ENCODE measurements at regions of chr16 and their contacts with region 1.

Region 1: DNA sequence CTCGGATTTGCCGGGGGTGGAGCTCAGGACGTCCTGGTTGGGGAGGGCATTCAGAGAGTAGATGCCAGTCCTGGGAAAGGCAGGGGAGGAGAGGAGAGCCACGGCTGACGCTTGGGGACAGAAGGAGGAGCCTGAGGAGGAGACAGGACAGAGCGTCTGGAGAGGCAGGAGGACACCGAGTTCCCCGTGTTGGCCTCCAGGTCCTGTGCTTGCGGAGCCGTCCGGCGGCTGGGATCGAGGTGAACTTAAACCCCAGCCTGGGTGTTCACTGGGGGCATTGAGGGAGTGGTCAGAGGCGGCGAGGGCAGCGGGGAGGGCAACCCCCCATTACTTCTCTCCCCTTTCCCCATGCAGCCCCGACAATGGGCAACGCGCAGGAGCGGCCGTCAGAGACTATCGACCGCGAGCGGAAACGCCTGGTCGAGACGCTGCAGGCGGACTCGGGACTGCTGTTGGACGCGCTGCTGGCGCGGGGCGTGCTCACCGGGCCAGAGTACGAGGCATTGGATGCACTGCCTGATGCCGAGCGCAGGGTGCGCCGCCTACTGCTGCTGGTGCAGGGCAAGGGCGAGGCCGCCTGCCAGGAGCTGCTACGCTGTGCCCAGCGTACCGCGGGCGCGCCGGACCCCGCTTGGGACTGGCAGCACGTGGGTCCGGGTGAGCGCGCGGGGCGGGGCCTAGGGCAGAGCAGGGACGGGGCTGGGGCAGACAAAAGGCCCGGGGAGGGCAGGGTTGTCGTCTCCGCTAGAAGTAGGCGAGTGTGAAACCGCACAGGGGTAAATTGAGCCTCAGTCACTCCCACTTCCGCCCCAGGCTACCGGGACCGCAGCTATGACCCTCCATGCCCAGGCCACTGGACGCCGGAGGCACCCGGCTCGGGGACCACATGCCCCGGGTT is 3.7 kb downstream of the NOL3 start:
- DNase-seq: peak; percentile 85 to 93
- H3K4me3 ChIP-seq: peak overlapping the region; percentile 57
- H3K27ac ChIP-seq: peak overlapping the region; percentile 64
- H3K4me1 ChIP-seq: peaks cover 56% of the 10 kb centered on the region
- H3K27me3 ChIP-seq: no peaks in the 10 kb centered on the region
- CTCF ChIP-seq: no peak; the same call in 1 of the 2 replicates

Region 2: DNA sequence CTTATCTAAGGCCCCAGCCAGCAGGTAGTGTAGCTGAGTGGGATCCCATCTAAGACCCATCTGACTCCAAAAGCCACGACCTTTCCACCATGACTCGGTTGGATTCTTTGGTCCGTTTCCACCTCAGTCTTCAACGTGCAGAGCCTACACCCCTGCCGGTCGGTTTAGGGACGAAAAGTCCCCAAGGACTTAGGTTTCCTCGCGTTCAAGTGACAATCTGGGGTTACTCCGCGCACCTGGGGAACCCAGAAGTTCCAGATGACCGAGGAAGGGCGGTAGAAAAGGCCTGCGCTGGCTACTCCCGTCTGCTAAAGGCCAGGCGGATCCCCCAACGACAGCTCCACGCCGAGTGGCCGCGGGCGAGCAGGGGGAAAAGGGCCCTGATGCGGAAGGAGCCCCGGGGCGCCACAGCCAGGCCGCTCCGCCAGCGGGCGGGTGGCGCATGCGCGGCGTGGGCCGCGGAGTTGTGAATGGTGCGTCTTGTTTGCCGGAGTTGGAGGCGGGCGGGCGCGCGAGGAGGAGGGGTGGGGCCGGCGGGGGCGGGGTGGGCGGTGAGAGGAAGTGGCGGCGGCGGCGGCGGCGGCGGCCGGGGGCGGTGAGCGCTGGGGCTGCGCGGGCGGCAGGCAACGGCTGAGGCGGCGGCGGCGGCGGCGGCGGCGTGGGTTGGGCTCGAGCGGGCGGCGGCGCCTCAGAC is 145.4 kb before region 1 on chr16 and contains the start of gene CBFB:
- CTCF ChIA-PET with region 1: no interaction called
- POLR2A ChIA-PET with region 1: interaction called, 11 read pairs
- intact Hi-C with region 1: no loop called
- DNase-seq: peak; percentile 72 to 92
- H3K4me3 ChIP-seq: peak within 1 kb of the TSS; percentile 67
- H3K27ac ChIP-seq: peak within 1 kb of the TSS; percentile 56
- H3K4me1 ChIP-seq: peaks cover 18% of the 10 kb centered on the region
- H3K27me3 ChIP-seq: no peaks in the 10 kb centered on the region
- CTCF ChIP-seq: peak; percentile 30; the same call in 1 of the 2 replicates
- total RNA-seq, gene CBFB: 58.7 and 63.3 TPM in 2 replicates

Region 3: GRCh38 chr16:67034487-67034886 is 139.6 kb before region 1 on chr16:
- CTCF ChIA-PET with region 1: no interaction called
- POLR2A ChIA-PET with region 1: interaction called, 11 read pairs
- intact Hi-C with region 1: no loop called
- DNase-seq: no peak
- H3K4me3 ChIP-seq: no peak overlapping the region
- H3K27ac ChIP-seq: no peak overlapping the region
- H3K4me1 ChIP-seq: peaks cover 13% of the 10 kb centered on the region
- H3K27me3 ChIP-seq: no peaks in the 10 kb centered on the region
- CTCF ChIP-seq: no peak

Region 4: GRCh38 chr16:67159593-67160406 is 14.3 kb before region 1 on chr16 and contains the starts of genes FBXL8 and TRADD:
- CTCF ChIA-PET with region 1: interaction called, 6 read pairs
- POLR2A ChIA-PET with region 1: interaction called, 11 read pairs
- intact Hi-C with region 1: loop called (anchors 1 kb)
- DNase-seq: peak; percentile 57 to 85
- H3K4me3 ChIP-seq: peak within 1 kb of the TSS; percentile 66
- H3K27ac ChIP-seq: peak within 1 kb of the TSS; percentile 60
- H3K4me1 ChIP-seq: peaks cover 9% of the 10 kb centered on the region
- H3K27me3 ChIP-seq: no peaks in the 10 kb centered on the region
- CTCF ChIP-seq: peak; percentile 67; the same call in 1 of the 2 replicates
- total RNA-seq, gene FBXL8: 53.2 and 54.4 TPM in 2 replicates
- total RNA-seq, gene TRADD: 38.0 and 50.3 TPM in 2 replicates

Region 5: DNA sequence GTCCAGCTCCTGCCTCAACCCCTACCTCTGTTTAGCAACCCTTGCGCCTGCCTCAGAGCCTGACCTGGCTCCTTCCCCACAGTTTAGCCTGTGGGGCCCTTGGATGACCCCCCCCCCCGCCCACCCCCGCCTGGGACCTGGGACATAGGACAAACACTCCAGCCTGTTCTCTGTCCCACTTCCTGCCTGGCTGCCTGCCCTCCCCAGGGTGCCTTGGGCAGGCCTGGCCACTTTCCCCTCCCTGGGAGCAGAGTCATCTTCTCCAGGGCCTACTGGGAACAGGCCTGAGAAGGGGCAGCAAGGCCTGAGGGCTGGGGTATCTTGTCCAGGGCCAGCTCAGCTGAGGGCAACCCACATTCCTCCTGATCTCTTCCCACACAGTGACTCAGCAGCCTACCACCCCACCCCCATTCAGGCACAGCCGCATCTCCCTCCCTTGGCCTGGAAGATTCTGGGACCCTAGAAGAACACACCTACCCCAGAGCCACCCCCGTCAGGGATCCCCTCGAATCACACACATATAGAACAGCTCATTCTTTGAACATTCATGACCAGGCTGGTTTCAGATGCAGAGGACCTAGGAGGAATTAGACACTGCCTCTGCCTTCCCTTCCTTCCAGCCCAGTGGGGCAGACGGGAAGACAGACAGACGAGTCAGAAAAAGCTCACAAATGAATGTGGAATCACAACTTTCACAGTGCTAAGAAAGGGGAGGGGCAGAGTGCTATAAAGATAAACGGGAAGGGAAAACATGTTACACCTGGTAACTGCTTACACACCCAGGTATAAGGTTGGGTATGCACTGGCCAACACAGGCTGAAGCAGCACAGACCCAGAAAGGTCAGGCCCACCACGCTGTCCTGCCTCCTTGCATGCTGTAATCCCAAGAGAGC is 67.2 kb after region 1 on chr16:
- CTCF ChIA-PET with region 1: no interaction called
- POLR2A ChIA-PET with region 1: interaction called, 16 read pairs
- intact Hi-C with region 1: loop called (anchors 5 kb)
- DNase-seq: peak; percentile 84 to 90
- H3K4me3 ChIP-seq: peak overlapping the region; percentile 13; the same call in 1 of the 2 replicates
- H3K27ac ChIP-seq: peak overlapping the region; percentile 84
- H3K4me1 ChIP-seq: peaks cover 64% of the 10 kb centered on the region
- H3K27me3 ChIP-seq: no peaks in the 10 kb centered on the region
- CTCF ChIP-seq: no peak

Region 6: GRCh38 chr16:67246934-67247697 is 73.1 kb after region 1 on chr16 and contains the start of gene FHOD1:
- CTCF ChIA-PET with region 1: no interaction called
- POLR2A ChIA-PET with region 1: interaction called, 16 read pairs
- intact Hi-C with region 1: loop called (anchors 5 kb)
- DNase-seq: peak; percentile 84 to 98
- H3K4me3 ChIP-seq: peak within 1 kb of the TSS; percentile 90
- H3K27ac ChIP-seq: peak within 1 kb of the TSS; percentile 76
- H3K4me1 ChIP-seq: peaks cover 45% of the 10 kb centered on the region
- H3K27me3 ChIP-seq: no peaks in the 10 kb centered on the region; the same call in 1 of the 2 replicates
- CTCF ChIP-seq: 0 out of 2 replicates have a peak, but pooled peaks have one; percentile 39
- total RNA-seq, gene FHOD1: 58.2 and 60.0 TPM in 2 replicates

Region 7: DNA sequence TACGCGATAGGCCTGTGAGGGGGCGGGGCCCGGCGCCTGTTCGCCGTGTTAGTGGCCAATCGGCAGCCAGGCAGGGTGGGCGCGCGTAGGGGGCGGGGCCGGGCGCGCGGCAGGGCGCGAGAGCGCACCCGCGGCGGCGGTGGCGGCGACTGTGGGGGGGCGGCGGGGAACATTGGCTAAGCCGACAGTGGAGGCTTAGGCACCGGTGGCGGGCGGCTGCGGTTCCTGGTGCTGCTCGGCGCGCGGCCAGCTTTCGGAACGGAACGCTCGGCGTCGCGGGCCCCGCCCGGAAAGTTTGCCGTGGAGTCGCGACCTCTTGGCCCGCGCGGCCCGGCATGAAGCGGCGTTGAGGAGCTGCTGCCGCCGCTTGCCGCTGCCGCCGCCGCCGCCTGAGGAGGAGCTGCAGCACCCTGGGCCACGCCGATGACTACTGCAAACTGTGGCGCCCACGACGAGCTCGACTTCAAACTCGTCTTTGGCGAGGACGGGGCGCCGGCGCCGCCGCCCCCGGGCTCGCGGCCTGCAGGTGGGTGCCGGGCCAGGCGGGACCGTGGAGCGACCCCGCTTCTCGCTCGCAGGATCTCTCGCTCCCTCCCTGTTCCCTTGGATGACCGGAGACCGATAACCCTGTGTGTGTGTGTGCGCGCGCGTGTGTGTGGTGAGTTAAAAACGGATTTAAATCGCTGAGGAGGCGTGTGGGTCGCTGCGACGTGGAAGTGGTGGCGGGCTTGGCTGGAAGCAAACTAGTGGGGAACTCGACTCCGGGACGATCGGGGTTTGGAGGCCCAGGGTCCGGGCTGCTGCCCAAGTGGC is 911.4 kb after region 1 on chr16 and contains the start of gene NFATC3:
- CTCF ChIA-PET with region 1: no interaction called
- POLR2A ChIA-PET with region 1: interaction called, 11 read pairs
- intact Hi-C with region 1: no loop called
- DNase-seq: peak; percentile 89 to 96
- H3K4me3 ChIP-seq: peak within 1 kb of the TSS; percentile 91
- H3K27ac ChIP-seq: peak within 1 kb of the TSS; percentile 51
- H3K4me1 ChIP-seq: peaks cover 14% of the 10 kb centered on the region
- H3K27me3 ChIP-seq: no peaks in the 10 kb centered on the region
- CTCF ChIP-seq: no peak
- total RNA-seq, gene NFATC3: 37.2 and 43.7 TPM in 2 replicates

Measured in PC-9 (cell line).